ENCODE measurements at regions of chr10 and their contacts with region 1.

Region 1: GRCh38 chr10:14195433-14195832 is 135.3 kb downstream of the FRMD4A start:
- DNase-seq: no peak
- H3K4me3 ChIP-seq: no peak overlapping the region
- H3K27ac ChIP-seq: no peak overlapping the region
- H3K27me3 ChIP-seq: peaks cover 13% of the 10 kb centered on the region
- CTCF ChIP-seq: no peak

Region 2: GRCh38 chr10:14478604-14479003 is 283.2 kb after region 1 on chr10:
- CTCF ChIA-PET with region 1: interaction called, 40 read pairs
- POLR2A ChIA-PET with region 1: no interaction called
- DNase-seq: peak; percentile 48
- H3K4me3 ChIP-seq: no peak overlapping the region
- H3K27ac ChIP-seq: no peak overlapping the region
- H3K27me3 ChIP-seq: no peaks in the 10 kb centered on the region
- CTCF ChIP-seq: peak; percentile 73